ENCODE measurements at regions of chr16 and their contacts with region 1.

Region 1: DNA sequence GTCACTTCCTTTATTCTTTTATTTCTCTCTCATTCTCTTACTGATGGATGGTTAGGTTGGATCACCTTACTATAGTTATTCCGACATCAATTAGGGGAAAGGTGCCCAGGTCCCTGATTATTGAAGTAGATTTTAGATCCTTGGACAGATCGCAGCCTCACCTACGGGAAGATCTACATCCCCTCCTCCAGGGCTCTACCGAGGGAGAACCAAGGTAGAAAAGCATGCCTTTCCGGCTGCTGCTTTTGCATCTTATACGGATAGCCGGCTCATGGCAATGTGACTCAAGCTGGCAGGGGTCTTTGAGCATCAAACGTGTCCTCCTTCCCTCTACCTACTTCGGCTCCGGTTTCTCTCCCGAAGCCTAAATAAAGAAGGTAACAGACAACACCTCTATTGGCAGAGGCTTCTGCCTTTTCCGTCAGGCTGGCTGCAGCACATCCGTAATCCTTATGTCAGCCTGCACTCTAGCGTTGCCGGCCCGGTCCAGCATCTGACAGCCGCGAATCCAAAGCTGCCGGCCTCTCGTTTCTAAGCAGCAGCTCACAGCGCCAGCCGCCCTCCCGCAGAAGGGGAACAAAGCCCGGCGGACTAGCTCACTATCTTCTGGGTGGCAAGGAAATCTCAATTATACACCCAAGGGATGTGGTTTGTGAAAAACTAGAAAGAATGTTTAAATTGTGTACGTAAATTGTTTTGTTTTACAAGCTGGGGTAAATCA is 46.9 kb downstream of the IRX6 start:
- DNase-seq: peak; percentile 73 to 74
- ATAC-seq: peak; percentile 76 to 90 (median 82)
- H3K4me3 ChIP-seq: peak overlapping the region in 2 of 10 donors; percentile 17 to 23
- H3K27ac ChIP-seq: peak overlapping the region in 8 of 10 donors; percentile 16 to 89 (median 84)
- H3K4me1 ChIP-seq: peaks cover 0 to 70% (median 27%) of the 10 kb centered on the region in 9 donors
- H3K27me3 ChIP-seq: peaks cover 0 to 57% (median 0%) of the 10 kb centered on the region in 7 donors
- CTCF ChIP-seq: peak in 8 of 9 donors; percentile 47 to 78 (median 56)

Region 2: DNA sequence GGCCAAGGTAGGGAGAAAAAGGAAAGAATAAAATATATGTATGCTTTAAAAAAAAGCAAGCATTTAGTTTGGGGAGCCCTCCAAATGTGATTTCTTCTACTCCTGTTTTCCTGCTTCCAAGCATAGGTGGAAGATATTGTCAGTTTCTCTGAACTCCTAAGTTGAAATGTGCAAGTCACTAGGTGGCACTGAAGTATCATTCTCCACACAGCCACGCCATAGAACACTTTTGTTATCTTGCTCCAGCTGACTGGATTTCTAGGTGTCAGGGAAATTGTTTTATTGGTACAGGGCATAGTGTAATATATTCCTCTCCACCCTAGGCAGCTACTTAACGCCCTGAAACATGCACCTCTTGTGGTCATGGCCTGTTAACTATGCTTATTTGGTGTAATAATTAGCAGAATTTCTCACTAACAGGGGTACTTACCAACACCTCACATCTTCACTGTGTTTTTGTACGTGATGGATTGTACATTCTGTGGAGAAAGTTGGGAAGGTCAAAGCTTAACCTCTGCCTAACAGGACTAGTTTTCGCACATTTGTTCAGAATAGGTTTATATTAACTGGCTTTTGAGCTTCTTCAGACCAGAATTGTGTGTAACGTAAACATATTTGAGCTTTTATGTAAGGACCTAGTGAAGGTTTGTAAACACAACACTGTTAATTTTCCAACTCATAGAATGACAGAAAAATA is 1597.6 kb before region 1 on chr16:
- intact Hi-C with region 1: loop called in 1 of 10 experiments (anchors 10 kb)
- DNase-seq: peak in 1 of 2 donors; percentile 50
- ATAC-seq: peak; percentile 76 to 94 (median 90)
- H3K4me3 ChIP-seq: no peak overlapping the region
- H3K27ac ChIP-seq: peak overlapping the region in 9 of 10 donors; percentile 9 to 68 (median 51)
- H3K4me1 ChIP-seq: peaks cover 2 to 94% (median 52%) of the 10 kb centered on the region in 9 donors
- H3K27me3 ChIP-seq: no peaks in the 10 kb centered on the region
- CTCF ChIP-seq: peak; percentile 23 to 75 (median 58)

Region 3: GRCh38 chr16:54936979-54937670 is 433.8 kb before region 1 on chr16:
- intact Hi-C with region 1: loop called in 7 of 10 experiments (anchors 5 to 10 kb)
- DNase-seq: peak; percentile 38 to 52
- ATAC-seq: peak; percentile 30 to 73 (median 58)
- H3K4me3 ChIP-seq: peak overlapping the region; percentile 17 to 90 (median 68)
- H3K27ac ChIP-seq: peak overlapping the region; percentile 14 to 96 (median 64)
- H3K4me1 ChIP-seq: peaks cover 3 to 46% (median 36%) of the 10 kb centered on the region in 9 donors
- H3K27me3 ChIP-seq: peaks cover 0 to 100% (median 88%) of the 10 kb centered on the region in 7 donors
- CTCF ChIP-seq: peak; percentile 36 to 73 (median 70)

Region 4: GRCh38 chr16:55033225-55034156 is 337.4 kb before region 1 on chr16:
- intact Hi-C with region 1: loop called in 1 of 10 experiments (anchors 5 kb)
- DNase-seq: no peak
- ATAC-seq: no peak
- H3K4me3 ChIP-seq: no peak overlapping the region
- H3K27ac ChIP-seq: no peak overlapping the region
- H3K4me1 ChIP-seq: no peaks in the 10 kb centered on the region
- H3K27me3 ChIP-seq: peaks cover 0 to 5% (median 0%) of the 10 kb centered on the region in 7 donors
- CTCF ChIP-seq: no peak

Region 5: DNA sequence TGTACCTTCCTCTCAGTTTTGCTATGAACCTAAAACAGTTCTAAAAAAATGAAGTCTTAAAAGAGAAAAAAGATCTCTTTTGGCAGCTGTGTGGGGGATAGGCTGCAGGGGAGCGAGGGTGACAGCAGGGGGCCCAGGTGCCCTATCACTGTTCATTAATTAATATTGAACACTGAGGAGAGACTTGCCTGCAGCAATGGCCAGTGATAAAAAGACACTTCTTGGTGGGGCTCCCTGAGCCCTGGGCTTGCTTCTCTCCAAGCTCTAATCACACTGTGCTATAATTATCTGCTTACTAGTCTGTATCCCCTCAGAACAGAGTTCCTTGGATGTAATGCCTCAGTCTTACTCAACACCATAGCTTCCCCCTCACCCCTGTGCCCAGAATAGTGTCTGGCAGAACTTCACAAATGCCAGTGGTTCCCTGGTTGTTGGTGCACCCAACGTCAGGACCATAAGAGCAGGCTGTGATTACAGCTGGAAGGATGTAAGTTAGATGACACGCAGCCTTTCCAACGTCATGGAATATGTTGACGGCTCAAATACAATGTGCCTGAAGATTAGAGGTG is 98.9 kb before region 1 on chr16:
- intact Hi-C with region 1: loop called in 1 of 10 experiments (anchors 5 kb)
- DNase-seq: peak; percentile 19 to 27
- ATAC-seq: peak; percentile 17 to 97 (median 94)
- H3K4me3 ChIP-seq: no peak overlapping the region
- H3K27ac ChIP-seq: peak overlapping the region in 3 of 10 donors; percentile 55 to 71 (median 64)
- H3K4me1 ChIP-seq: peaks cover 0 to 6% (median 0%) of the 10 kb centered on the region in 9 donors
- H3K27me3 ChIP-seq: no peaks in the 10 kb centered on the region
- CTCF ChIP-seq: no peak

Region 6: GRCh38 chr16:55297062-55297909 is 73.6 kb before region 1 on chr16:
- intact Hi-C with region 1: no loop called
- DNase-seq: no peak
- ATAC-seq: no peak
- H3K4me3 ChIP-seq: no peak overlapping the region
- H3K27ac ChIP-seq: no peak overlapping the region
- H3K4me1 ChIP-seq: peaks cover 0 to 11% (median 0%) of the 10 kb centered on the region in 9 donors
- H3K27me3 ChIP-seq: peaks cover 0 to 14% (median 3%) of the 10 kb centered on the region in 7 donors
- CTCF ChIP-seq: no peak

Region 7: DNA sequence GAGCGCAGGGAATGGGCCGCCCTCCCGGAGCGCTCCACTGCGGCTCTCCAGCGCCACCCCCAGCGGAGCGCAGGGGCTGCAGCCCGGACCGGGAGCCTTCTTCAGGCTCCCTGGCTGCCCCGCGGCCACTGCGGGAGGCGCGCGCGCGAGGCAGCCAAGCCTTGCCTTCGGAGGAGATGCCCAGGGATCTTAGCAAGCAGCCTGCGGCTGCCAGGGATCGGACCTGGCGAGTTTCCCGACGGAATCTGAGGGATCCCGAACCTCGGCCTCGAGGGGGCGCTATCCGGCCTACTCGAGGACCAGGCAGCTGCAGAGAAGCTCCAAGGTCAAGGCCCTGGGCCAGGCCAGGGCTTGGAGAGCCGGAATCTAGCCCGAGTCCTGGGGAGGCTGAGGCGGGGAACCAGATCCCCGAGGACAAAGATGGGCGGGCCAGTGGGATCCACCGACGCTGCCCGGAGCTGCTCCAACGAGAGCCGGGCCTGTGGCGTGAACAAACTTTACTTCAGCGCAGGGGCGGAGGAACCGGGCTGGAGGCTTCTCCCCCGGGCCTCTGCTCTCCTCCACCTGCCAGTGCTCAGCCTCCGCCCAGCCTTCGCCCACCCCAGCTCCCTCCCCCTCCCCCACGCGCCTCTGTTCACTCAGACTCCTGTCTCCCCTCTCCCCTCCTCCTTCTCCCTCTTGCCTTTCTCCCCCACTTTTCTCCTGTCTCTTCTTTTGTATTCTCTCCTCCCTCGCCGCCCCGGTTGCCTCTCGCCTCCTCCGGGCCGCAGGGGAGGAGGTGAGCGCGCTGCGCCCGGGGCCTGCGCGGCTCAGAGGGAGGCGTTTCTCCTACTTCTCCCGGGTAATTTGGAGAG is 47.1 kb before region 1 on chr16 and contains the start of gene IRX6:
- intact Hi-C with region 1: loop called in 2 of 10 experiments (anchors 2 to 5 kb)
- DNase-seq: peak; percentile 68 to 71
- ATAC-seq: peak; percentile 75 to 91 (median 83)
- H3K4me3 ChIP-seq: peak within 1 kb of the TSS; percentile 23 to 64 (median 49)
- H3K27ac ChIP-seq: peak within 1 kb of the TSS in 8 of 10 donors; percentile 74 to 97 (median 92)
- H3K4me1 ChIP-seq: peaks cover 0 to 35% (median 7%) of the 10 kb centered on the region in 9 donors
- H3K27me3 ChIP-seq: peaks cover 4 to 92% (median 65%) of the 10 kb centered on the region in 7 donors
- CTCF ChIP-seq: peak in 8 of 9 donors; percentile 44 to 82 (median 64)
- total RNA-seq, gene IRX6: 0.18 to 28.1 (median 14.3) TPM